Activated naive CD4-positive, alpha-beta T cell treated with anti-CD3 and anti-CD28 coated beads for 36 hours (primary cell): ENCODE measurements at regions of chr3 and their contacts with region 1.

Region 1: DNA sequence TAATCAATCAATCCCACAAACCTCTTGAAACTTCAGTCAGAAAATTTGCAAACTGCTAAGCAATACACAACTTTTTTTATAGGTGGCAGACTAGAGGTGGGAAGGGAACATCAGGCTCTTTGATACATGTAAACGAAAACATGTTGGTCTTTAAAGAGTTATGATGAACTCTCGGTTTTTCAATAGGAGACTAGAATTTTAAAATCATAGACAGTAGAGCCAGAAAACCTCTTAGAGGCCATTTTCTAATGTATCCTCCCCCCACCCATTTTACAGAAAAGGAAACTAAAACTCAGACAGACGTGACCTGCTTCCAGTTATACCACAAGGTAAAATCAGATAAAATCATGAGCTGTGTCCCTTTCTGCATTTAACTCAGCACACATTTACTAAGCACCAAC is 179.1 kb upstream of the LPP start:
- DNase-seq: no peak
- H3K4me3 Mint-ChIP-seq: peak overlapping the region; percentile 50
- H3K27ac Mint-ChIP-seq: peak overlapping the region; percentile 82
- H3K4me1 Mint-ChIP-seq: peaks cover 50% of the 10 kb centered on the region
- H3K27me3 Mint-ChIP-seq: no peaks in the 10 kb centered on the region

Region 2: DNA sequence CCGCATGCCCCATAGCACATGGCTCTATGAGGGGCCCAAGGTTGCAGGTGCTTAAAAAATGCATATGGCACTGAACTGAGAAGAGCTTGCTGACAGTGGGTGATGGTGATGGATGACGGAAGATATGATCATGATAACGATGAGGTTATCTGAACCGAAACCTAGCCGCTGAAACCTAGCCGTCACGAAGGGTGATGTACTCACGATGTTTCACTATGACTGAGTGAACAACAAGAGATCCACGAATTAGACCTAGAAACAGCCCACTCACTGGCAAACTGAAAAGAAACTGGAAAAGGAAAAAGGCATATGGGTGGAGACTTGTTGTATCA is 172.0 kb before region 1 on chr3:
- CTCF ChIA-PET with region 1: interaction called, 3 read pairs
- intact Hi-C with region 1: loop called (anchors 1 kb)
- DNase-seq: peak; percentile 89
- H3K4me3 Mint-ChIP-seq: peak overlapping the region; percentile 1
- H3K27ac Mint-ChIP-seq: peak overlapping the region; percentile 79
- H3K4me1 Mint-ChIP-seq: peaks cover 95% of the 10 kb centered on the region
- H3K27me3 Mint-ChIP-seq: no peaks in the 10 kb centered on the region

Region 3: DNA sequence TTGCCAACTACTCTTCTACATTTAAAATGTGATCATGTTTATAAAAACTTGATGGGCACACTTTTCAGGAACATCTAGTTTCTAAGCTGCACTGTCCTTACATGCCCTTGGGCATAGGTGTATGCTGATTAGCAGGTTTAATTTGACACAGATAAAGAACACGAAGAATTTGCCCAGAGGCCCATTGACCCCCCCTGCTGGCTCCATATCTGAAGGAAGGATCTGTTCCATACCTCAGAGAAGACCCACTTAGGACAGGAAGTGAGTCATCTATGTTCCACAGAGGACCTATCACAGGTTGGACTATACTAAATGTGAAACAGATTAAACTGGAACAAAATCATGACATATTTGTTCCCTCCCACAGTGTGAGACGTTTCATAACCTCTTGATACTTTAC is 86.3 kb after region 1 on chr3:
- CTCF ChIA-PET with region 1: interaction called, 3 read pairs
- intact Hi-C with region 1: loop called (anchors 1 kb)
- DNase-seq: peak; percentile 74
- H3K4me3 Mint-ChIP-seq: no peak overlapping the region
- H3K27ac Mint-ChIP-seq: peak overlapping the region; percentile 68
- H3K4me1 Mint-ChIP-seq: peaks cover 32% of the 10 kb centered on the region
- H3K27me3 Mint-ChIP-seq: no peaks in the 10 kb centered on the region

Region 4: DNA sequence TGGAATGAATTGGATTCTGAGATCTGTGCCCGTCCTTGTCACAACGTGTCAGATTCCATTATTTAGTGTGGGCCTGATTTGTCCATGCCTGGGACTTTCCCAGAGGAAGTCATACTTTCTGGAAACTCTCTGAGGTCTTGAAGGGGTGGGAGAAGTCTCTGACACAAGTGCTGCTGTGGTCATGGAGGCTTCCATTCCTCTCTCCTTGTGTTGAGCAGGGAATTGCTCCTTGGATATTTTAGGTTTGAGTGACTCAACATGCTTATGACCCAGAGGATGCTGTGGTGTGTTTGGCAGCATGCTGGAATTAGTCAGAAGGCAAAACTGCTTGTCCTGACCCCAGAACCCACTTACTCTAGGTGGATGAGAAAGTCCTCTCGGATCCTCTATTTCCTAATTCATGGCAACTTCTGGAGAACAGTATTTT is 311.2 kb after region 1 on chr3:
- CTCF ChIA-PET with region 1: no interaction called
- intact Hi-C with region 1: loop called (anchors 1 kb)
- DNase-seq: peak; percentile 32
- H3K4me3 Mint-ChIP-seq: no peak overlapping the region
- H3K27ac Mint-ChIP-seq: no peak overlapping the region
- H3K4me1 Mint-ChIP-seq: peaks cover 45% of the 10 kb centered on the region
- H3K27me3 Mint-ChIP-seq: no peaks in the 10 kb centered on the region

Region 5: GRCh38 chr3:188339410-188340295 is 364.8 kb after region 1 on chr3:
- CTCF ChIA-PET with region 1: no interaction called
- intact Hi-C with region 1: loop called (anchors 1 kb)
- DNase-seq: peak; percentile 76
- H3K4me3 Mint-ChIP-seq: peak overlapping the region; percentile 59
- H3K27ac Mint-ChIP-seq: peak overlapping the region; percentile 92
- H3K4me1 Mint-ChIP-seq: peaks cover 34% of the 10 kb centered on the region
- H3K27me3 Mint-ChIP-seq: no peaks in the 10 kb centered on the region